ENCODE measurements at regions of chr1 and their contacts with region 1.

Region 1: DNA sequence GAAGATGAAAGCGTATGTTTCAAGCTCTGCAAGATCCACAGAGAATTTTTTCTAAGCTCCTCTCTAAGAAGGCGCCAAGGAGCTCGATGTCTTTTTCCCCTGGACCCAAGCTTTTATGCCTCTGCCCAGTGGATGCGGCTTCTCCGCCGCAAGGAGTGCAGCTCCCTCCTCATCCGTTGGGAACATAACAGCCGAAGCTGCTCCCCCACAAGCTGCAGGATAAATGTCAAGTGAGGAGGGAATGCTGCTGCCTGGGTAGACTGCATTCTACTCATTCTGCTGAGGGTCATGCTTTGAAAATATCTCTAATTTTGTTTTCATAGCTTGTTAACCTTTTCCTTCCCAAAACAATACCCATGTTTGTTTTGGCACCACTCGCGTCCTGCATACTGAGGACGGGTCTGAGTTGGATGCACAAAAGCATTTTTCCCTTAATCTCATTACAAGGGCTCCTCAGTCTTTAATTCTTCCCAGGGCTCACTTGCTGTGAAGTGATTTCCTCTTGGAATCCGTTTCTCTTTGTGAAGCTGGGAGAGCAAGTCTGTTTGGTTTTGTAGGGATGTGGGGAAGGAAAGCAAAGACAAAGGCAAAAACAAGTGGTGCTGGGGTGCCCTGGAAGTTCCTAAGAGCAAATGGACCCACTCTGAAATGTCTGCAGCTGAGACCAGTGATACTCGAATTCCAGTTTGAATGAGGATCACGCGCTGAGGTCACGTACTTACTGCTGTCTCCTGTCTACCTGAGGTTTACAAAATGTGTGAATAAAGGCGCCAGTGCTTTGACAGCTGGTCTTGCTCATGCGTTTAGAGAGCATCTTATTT is 134.0 kb upstream of the IRF2BP2 start:
- DNase-seq: no peak

Region 2: GRCh38 chr1:234599617-234600417 is 144.2 kb before region 1 on chr1:
- CTCF ChIA-PET with region 1: no interaction called
- POLR2A ChIA-PET with region 1: interaction called, 10 read pairs
- DNase-seq: peak; percentile 74

Region 3: DNA sequence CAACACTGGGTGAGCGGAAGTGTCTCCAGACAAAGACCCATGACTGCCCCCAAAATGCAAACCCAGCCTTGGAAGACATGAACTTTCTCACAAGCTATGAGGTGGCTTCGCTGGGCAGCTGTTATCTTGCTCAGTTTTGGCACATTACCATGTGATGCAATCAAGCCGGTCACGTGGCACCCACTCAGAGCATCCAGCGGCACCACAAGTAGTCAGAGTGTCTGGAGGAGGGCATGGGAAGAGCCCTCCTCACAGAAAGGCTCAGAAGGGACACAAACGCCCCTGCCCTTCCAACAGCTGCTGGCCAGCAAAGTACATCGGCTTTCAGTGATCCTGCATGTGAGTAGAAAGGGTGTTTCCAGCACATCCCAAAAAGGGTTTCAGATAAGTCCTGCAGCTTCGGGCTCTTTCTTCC is 11.5 kb after region 1 on chr1:
- CTCF ChIA-PET with region 1: interaction called, 7 read pairs
- POLR2A ChIA-PET with region 1: interaction called, 13 read pairs
- DNase-seq: no peak

Measured in HEK293T (cell line).